ENCODE measurements at regions of chr3 and their contacts with region 1.

Region 1: DNA sequence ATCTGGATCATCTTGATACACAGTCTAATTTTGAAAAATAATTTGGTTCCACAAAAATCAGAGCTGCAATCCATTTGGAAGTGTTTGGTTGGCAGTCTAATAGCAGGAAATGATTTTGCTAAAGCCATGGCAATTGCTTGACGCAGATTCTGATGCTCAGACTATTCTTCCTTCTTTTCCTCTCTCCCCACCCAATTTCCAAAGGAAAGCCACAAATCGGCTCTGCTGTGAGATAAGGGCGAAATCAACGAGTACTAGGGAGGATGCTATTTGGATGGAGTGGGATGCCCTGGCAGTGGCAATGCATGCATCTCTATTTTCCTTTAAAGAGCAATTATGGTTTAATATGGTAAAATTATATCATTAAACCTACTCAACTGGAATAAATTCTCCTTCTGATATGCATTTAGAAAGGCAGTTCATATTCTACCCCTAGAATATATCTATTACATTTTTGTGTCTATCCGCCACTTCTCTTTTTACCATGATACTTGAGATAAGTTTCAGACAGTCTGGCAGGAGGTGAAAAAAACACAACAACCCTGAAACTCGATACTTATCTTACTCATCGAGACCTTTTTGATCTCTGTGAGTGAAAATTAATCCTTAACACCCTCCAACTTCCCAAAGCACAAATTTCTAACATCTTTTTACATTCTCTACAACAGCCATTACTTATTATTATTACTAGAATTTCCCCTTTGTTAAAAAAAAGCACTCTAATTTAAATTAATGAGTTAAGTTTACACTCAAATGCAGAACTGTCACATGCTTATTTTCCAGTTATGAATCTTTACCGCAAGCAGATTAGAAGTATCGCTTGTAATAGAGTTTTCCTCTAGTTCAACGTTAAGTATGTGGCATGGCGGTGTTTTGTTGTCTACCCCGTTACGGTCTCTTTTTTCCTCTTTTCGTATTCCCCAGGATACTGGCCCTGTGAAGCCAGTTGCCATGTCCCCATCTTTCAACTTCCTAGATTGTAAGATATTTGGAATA is 433.3 kb downstream of the FOXP1 start:
- DNase-seq: no peak
- H3K4me3 Mint-ChIP-seq: peak overlapping the region; percentile 3
- H3K27ac Mint-ChIP-seq: peak overlapping the region; percentile 71
- H3K4me1 Mint-ChIP-seq: peaks cover 40% of the 10 kb centered on the region
- H3K27me3 Mint-ChIP-seq: no peaks in the 10 kb centered on the region

Region 2: GRCh38 chr3:70982700-70983140 is 167.5 kb before region 1 on chr3:
- intact Hi-C with region 1: no loop called
- DNase-seq: no peak
- H3K4me3 Mint-ChIP-seq: peak overlapping the region; percentile 27
- H3K27ac Mint-ChIP-seq: peak overlapping the region; percentile 95
- H3K4me1 Mint-ChIP-seq: peaks cover 46% of the 10 kb centered on the region
- H3K27me3 Mint-ChIP-seq: no peaks in the 10 kb centered on the region

Region 3: DNA sequence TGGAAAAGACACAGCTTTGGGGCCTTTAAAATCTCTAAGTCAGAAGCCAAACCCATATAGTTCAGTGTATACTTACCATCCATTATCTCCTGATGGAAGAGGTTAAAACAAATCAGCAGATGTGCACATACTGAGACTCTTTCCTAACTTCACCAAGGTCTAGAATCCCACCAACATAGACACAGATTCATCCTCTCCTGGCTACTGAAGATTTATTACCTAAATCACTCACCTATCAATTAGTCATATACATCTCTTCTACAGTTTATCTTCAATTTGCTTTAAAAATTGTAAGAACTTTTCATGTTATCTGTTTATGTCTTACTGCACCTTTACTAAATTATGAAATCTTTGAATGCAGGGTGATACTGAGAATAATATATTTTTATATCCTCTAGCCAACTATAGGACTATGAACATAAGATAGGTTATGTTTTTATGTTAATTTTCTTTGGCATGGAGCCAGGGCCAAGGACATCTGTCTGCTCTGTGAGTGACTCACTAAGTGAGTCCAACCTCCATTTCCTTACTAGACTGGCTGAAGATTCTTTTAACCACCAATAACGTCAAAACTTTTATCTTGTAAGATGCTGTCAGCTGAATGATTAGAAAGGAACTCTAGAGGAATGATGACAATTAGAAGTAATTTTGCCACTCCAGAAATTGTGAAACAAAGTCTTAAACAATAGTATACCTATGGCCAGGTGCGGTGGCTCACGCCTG is 35.6 kb after region 1 on chr3:
- intact Hi-C with region 1: loop called (anchors 5 kb)
- DNase-seq: no peak
- H3K4me3 Mint-ChIP-seq: no peak overlapping the region
- H3K27ac Mint-ChIP-seq: peak overlapping the region; percentile 35
- H3K4me1 Mint-ChIP-seq: peaks cover 48% of the 10 kb centered on the region
- H3K27me3 Mint-ChIP-seq: no peaks in the 10 kb centered on the region